ENCODE measurements at regions of chr1 and their contacts with region 1.

Region 1: DNA sequence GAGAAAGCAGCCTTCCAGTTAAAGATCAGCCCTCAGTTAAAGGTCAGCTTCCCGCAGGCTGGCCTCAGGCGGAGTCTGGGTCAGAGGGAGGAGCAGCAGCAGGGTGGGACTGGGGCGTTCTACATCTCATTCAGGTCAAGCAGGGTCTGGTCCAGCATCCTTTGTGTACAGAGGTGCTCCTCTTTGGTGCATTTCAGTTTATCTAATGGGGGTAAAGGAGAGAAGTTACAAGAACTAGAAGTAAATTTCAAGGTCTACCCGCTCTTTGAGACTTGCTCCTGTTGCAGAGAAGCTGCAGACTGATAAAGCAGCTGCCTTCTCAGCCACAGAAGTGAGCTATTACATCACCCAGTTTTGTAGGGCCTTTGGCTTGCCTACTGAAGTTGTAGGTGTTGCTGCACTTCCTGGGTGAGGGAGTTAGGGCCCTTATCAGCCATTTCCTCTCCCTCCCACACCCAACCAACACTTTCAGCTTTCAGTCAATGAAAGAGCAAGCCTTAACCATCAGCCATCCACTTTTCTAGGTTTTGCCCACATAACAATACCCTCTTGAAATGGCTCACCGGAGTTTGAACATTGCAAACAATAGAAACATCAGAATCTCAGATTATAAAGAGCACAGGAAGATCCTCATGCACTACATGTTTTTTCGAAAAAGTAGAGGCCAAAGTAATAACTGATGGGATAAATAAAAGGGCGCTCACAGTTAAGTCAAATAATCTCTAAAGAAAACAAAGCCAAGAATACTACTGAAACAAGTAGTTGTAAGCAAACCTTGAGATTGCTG is 2.8 kb upstream of the NUP210L start:
- DNase-seq: peak; percentile 87
- H3K4me3 Mint-ChIP-seq: peak overlapping the region; percentile 48
- H3K27ac Mint-ChIP-seq: peak overlapping the region; percentile 96
- H3K4me1 Mint-ChIP-seq: peaks cover 70% of the 10 kb centered on the region
- H3K27me3 Mint-ChIP-seq: no peaks in the 10 kb centered on the region

Region 2: DNA sequence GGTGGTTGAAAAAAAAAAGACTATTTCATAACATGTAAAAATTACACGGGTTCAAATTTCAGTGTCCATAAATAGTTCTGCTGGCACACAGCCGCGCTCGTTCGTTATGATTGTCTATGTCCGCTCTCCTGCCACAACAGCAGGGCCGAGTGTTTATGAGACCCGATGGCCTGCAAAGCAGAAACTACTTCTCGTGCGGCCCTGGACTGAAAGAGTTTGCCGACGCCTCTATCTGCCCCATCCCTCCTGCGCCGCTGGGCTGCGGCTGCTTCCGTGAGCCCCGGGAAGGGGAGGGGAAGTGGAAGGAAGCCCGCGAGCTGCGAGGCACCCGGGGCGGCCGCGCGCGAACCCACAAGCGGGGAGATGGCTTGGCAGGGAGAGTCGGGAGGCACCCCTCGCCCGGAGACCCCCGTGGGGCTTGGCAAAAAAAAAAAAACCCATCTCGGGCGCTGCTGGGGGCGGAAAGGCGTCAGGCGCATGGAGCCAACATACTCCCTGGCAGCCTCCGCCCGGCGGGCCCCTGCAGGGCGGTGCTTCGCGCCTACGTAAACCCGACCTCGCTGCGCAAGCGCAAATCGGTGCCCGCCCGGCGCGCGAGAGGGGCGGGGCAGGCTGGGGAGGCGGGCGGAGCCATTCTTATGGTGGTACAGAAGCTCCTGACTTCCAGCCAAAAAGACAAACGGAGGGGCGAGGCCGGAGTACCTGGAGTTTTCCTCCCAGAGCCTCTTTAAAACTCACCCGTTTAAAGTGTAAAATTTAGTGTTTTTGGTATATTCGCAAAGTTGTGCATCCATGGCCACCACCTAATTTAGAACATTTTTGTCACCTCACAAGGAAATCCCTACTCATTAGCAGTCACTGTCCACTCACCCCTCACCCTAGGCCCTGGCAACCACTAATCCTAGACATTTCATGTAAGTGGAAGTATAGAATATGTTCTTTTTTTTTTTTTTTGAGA is 374.2 kb before region 1 on chr1:
- CTCF ChIA-PET with region 1: no interaction called
- intact Hi-C with region 1: loop called (anchors 2 kb)
- DNase-seq: peak; percentile 93
- H3K4me3 Mint-ChIP-seq: peak overlapping the region; percentile 95
- H3K27ac Mint-ChIP-seq: peak overlapping the region; percentile 92
- H3K4me1 Mint-ChIP-seq: peaks cover 5% of the 10 kb centered on the region
- H3K27me3 Mint-ChIP-seq: no peaks in the 10 kb centered on the region

Region 3: GRCh38 chr1:153903841-153904455 is 253.8 kb before region 1 on chr1:
- CTCF ChIA-PET with region 1: no interaction called
- intact Hi-C with region 1: no loop called
- DNase-seq: no peak
- H3K4me3 Mint-ChIP-seq: no peak overlapping the region
- H3K27ac Mint-ChIP-seq: no peak overlapping the region
- H3K4me1 Mint-ChIP-seq: peaks cover 29% of the 10 kb centered on the region
- H3K27me3 Mint-ChIP-seq: no peaks in the 10 kb centered on the region

Region 4: DNA sequence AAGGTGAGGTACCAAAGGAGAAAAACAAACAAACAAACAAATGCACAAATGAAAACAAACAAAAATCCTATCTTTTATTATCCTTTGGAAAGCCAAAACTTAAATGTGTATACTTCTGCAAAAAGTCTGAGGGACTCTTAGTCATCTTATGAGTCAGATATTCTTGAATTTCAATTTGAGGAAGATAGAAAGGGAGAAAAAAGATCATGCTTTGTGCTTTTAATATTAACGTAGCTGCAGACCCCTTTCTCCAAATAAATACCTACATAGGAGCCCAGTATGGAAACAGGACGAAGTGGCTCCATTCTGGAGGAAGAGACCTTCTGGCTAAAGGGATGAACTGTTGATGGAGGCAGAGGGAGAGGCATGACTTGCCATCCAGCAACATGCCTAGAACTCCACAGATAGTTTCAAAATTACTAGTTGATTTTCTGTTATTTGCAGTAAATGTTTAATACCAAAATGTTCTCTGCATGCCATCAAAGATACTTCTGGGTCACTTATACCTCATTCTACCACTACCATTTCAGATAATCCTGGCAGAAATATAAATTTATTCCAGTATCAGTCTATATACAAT is 28.2 kb before region 1 on chr1:
- CTCF ChIA-PET with region 1: no interaction called
- intact Hi-C with region 1: no loop called
- DNase-seq: no peak
- H3K4me3 Mint-ChIP-seq: no peak overlapping the region
- H3K27ac Mint-ChIP-seq: no peak overlapping the region
- H3K4me1 Mint-ChIP-seq: peaks cover 12% of the 10 kb centered on the region
- H3K27me3 Mint-ChIP-seq: peaks cover 2% of the 10 kb centered on the region

Region 5: GRCh38 chr1:154145986-154146385 is 11.7 kb before region 1 on chr1:
- CTCF ChIA-PET with region 1: interaction called, 4 read pairs
- intact Hi-C with region 1: loop called (anchors 1 kb)
- DNase-seq: no peak
- H3K4me3 Mint-ChIP-seq: no peak overlapping the region
- H3K27ac Mint-ChIP-seq: no peak overlapping the region
- H3K4me1 Mint-ChIP-seq: peaks cover 13% of the 10 kb centered on the region
- H3K27me3 Mint-ChIP-seq: no peaks in the 10 kb centered on the region

Region 6: DNA sequence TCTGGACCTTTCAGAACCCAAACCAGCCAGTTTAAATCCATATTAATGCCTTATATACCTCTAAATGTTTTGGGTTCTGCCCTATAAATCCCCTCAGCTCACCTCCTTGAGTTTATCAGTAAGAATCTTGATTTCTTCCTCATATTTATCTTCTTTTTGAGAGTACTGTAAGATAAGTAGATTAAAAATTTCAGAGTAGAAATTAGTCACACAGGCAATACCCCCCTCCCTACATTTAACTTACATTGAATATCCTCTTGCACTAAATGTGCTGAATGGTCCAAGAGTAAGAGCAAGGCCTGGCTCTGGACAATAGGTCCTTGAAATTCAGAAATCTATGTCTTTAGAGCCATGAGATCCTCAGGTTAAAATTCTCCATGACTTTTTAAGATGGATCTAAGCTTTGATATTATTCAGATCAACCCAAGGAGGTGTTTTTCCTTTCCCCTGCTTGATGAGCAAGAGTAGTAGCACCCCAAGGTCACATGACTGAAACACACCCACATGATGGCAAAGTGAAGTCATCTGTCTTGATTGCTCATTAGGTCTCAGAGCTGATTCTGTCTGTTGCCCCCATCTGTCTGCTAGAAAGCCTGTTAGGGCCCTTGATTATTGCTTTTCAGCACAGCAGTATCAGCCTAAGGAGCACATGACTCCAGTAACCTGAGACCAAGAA is 13.0 kb after region 1 on chr1:
- CTCF ChIA-PET with region 1: interaction called, 3 read pairs
- intact Hi-C with region 1: loop called (anchors 1 kb)
- DNase-seq: peak; percentile 85
- H3K4me3 Mint-ChIP-seq: peak overlapping the region; percentile 17
- H3K27ac Mint-ChIP-seq: peak overlapping the region; percentile 80
- H3K4me1 Mint-ChIP-seq: peaks cover 46% of the 10 kb centered on the region
- H3K27me3 Mint-ChIP-seq: no peaks in the 10 kb centered on the region

Measured in activated naive CD4-positive, alpha-beta T cell treated with anti-CD3 and anti-CD28 coated beads for 36 hours (primary cell).